Endothelial cell of umbilical vein (primary cell): ENCODE measurements at regions of chr14 and their contacts with region 1.

Region 1: GRCh38 chr14:55160989-55161388 is 30.4 kb downstream of the DLGAP5 start:
- DNase-seq: peak; percentile 57
- H3K4me3 ChIP-seq: no peak overlapping the region
- H3K27ac ChIP-seq: no peak overlapping the region
- H3K4me1 ChIP-seq: no peaks in the 10 kb centered on the region
- H3K27me3 ChIP-seq: no peaks in the 10 kb centered on the region
- CTCF ChIP-seq: peak in 1 of 2 donors; percentile 21
- POLR2A ChIP-seq: no peak

Region 2: GRCh38 chr14:55071870-55072640 is 88.9 kb before region 1 on chr14:
- CTCF ChIA-PET with region 1: interaction called, 21 read pairs
- POLR2A ChIA-PET with region 1: no interaction called
- dilution Hi-C with region 1: no loop called
- intact Hi-C with region 1: no loop called
- DNase-seq: peak; percentile 63
- H3K4me3 ChIP-seq: no peak overlapping the region
- H3K27ac ChIP-seq: peak overlapping the region; percentile 31
- H3K4me1 ChIP-seq: peaks cover 10% of the 10 kb centered on the region
- H3K27me3 ChIP-seq: no peaks in the 10 kb centered on the region
- CTCF ChIP-seq: no peak
- POLR2A ChIP-seq: peak; percentile 20

Region 3: DNA sequence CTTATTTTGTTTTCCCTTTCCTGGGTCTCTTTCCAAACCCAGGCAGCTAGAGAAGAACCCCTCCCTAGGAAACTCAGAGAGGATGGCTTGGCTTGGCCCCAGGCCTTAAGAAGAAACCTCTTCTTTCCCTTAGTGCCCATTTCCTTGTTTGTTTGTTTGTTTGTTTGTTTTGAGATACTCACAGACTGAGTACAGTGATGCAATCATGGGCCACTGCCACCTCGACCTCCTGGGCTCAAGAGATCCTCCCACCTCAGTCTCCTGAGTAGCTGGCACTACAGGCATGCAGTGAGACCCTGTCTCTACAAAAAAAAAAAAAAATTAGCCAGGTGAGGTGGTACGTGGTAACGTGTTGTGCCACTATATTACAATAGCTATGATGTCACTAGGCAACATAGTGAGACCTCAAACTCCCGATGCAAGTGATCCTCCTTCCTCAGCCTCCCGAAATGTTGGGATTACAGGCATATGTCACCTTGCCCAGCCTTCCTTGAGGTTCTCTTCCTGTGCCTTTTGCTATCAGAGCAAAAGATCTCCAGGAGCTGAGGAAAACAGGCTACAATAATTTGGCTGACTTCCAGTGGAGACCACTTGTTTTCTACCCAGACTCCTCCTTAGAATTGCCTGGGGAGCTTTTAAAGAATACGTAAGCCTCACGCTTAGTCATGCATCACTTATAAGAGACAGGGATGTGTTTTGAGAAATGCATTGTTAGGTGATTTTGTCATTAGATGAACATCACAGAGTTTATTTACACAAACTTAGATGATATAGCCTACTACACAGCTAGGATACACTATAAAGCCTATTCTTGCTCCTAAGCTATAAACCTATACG is 66.5 kb before region 1 on chr14:
- CTCF ChIA-PET with region 1: interaction called, 187 read pairs
- POLR2A ChIA-PET with region 1: no interaction called
- dilution Hi-C with region 1: no loop called
- intact Hi-C with region 1: loop called (anchors 1 kb)
- DNase-seq: no peak
- H3K4me3 ChIP-seq: no peak overlapping the region
- H3K27ac ChIP-seq: no peak overlapping the region
- H3K4me1 ChIP-seq: no peaks in the 10 kb centered on the region
- H3K27me3 ChIP-seq: no peaks in the 10 kb centered on the region
- CTCF ChIP-seq: no peak
- POLR2A ChIP-seq: no peak

Region 4: GRCh38 chr14:55136885-55137786 is 23.9 kb before region 1 on chr14:
- CTCF ChIA-PET with region 1: interaction called, 24 read pairs
- POLR2A ChIA-PET with region 1: no interaction called
- dilution Hi-C with region 1: no loop called
- intact Hi-C with region 1: no loop called
- DNase-seq: peak; percentile 85
- H3K4me3 ChIP-seq: no peak overlapping the region
- H3K27ac ChIP-seq: peak overlapping the region; percentile 37
- H3K4me1 ChIP-seq: peaks cover 13% of the 10 kb centered on the region
- H3K27me3 ChIP-seq: no peaks in the 10 kb centered on the region
- CTCF ChIP-seq: no peak
- POLR2A ChIP-seq: no peak

Region 5: DNA sequence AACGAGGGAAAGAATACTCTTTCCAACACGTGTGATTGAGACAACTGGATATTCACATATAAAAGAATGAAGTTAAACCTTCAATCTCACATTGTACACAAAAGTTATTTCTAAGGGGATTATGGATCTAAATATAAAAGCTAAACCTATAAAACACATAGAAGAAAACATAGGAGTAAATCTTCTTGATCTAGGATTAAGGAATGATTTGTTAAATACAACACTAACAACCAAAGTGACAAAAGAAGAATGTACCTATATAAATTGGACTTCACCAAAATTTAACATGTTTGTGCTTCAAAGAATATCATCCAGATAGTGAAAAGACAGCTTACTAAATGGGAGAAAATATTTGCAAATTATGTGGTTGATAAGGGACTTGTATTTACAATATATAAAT is 67.3 kb after region 1 on chr14:
- CTCF ChIA-PET with region 1: no interaction called
- POLR2A ChIA-PET with region 1: no interaction called
- dilution Hi-C with region 1: no loop called
- intact Hi-C with region 1: no loop called
- DNase-seq: no peak
- H3K4me3 ChIP-seq: no peak overlapping the region
- H3K27ac ChIP-seq: no peak overlapping the region
- H3K4me1 ChIP-seq: no peaks in the 10 kb centered on the region
- H3K27me3 ChIP-seq: peaks cover 1 to 8% of the 10 kb centered on the region in 2 experiments
- CTCF ChIP-seq: no peak
- POLR2A ChIP-seq: no peak